Right ventricle myocardium inferior (tissue), 1 donor: ENCODE measurements at regions of chr9 and their contacts with region 1.

Region 1: DNA sequence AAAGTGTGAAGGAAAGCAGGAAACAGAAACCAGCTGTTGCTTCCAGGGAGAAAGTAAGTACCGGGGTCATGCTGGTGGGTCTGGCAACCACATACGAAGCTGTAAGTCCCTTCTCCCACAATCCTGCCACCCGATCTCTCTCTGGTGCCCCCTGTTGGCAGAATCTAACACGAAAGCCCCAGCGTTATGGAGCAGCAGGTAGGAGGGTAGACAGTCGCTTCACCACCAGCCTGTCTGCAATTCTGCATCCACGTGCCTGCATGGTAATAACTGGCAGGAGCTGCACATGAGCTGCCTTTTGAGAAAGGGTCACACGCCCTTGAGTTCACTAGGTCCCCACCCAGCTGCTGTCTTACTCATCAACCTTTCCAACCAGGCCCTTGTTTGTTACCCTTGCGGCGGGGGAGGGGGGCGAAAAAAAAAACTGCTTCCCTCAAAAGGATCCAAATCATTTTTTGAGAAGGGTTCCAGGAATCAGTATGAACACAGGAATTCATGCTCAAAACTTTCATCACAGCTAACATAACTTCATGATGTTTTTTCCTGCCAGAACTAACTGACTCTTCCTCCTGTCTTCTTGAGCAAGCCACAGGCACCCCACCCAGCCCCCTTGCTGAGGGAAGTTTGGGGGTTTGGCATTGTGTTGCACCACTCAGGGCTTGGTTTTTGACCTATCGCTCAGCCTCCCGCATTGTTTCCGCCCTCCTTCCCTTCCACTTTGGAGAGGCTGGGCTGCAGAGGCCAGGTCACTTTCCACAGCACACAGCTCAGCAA is 19.6 kb upstream of the TMEM252 start:
- DNase-seq: peak; percentile 73
- ATAC-seq: peak; percentile 58

Region 2: DNA sequence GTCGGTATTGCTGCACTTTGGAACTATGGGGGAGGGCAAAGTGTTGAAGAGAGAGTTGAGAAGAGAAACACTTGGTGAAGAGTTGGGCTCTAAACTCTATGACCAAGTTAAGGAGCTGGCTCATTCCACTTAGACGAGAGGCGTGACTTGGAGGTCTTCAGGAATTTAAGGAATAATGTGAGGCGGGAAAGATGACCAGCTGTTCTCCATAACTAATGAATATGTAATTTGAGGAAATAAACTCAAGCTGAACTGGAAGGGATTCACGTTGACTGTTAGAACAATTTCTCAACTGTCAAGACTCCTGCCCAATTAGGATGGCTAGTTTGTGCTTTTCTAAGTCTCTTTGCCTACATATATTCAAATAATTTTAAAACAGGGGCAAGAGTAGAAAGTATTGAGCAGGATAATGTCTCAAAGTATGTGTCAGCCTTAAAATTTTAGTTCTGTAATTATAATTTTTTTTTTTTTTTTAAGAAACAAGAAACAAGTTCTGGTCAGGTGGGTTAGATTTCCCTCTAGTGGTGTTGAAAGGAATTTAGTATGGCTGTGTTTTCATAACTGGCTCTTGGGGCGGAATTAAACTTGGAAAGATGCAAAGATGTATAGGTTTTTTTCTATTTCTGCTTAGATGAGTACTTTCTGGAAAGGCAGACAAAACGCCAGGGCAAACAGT is 53.0 kb before region 1 on chr9:
- intact Hi-C with region 1: loop called (anchors 5 kb)
- DNase-seq: no peak
- ATAC-seq: peak; percentile 57